Heart left ventricle (tissue), 16 donors: ENCODE measurements at regions of chr11 and their contacts with region 1.

Region 1: GRCh38 chr11:11787305-11788062 is 54.3 kb upstream of the USP47 start:
- DNase-seq: peak; percentile 55 to 78 (median 62)
- ATAC-seq: peak; percentile 53 to 93 (median 87)
- H3K4me3 ChIP-seq: no peak overlapping the region
- H3K27ac ChIP-seq: no peak overlapping the region
- H3K4me1 ChIP-seq: peaks cover 0 to 6% (median 0%) of the 10 kb centered on the region in 12 donors
- H3K27me3 ChIP-seq: no peaks in the 10 kb centered on the region
- CTCF ChIP-seq: peak; percentile 81 to 97 (median 87)
- POLR2A ChIP-seq: no peak

Region 2: GRCh38 chr11:10933455-10934292 is 853.8 kb before region 1 on chr11:
- intact Hi-C with region 1: loop called in 9 of 10 experiments (anchors 1 to 5 kb)
- DNase-seq: peak; percentile 88 to 93 (median 91)
- ATAC-seq: peak; percentile 83 to 95 (median 92)
- H3K4me3 ChIP-seq: peak overlapping the region in 11 of 12 donors; percentile 27 to 60 (median 50)
- H3K27ac ChIP-seq: peak overlapping the region in 11 of 12 donors; percentile 30 to 84 (median 73)
- H3K4me1 ChIP-seq: peaks cover 0 to 24% (median 6%) of the 10 kb centered on the region in 12 donors
- H3K27me3 ChIP-seq: peaks cover 0 to 12% (median 0%) of the 10 kb centered on the region in 9 donors
- CTCF ChIP-seq: peak; percentile 88 to 99 (median 96)
- POLR2A ChIP-seq: peak in 1 of 2 donors; percentile 30

Region 3: GRCh38 chr11:11036848-11037732 is 750.4 kb before region 1 on chr11:
- intact Hi-C with region 1: loop called in 8 of 10 experiments (anchors 1 to 2 kb)
- DNase-seq: peak in 2 of 5 donors; percentile 39
- ATAC-seq: peak; percentile 68 to 88 (median 78)
- H3K4me3 ChIP-seq: no peak overlapping the region
- H3K27ac ChIP-seq: peak overlapping the region in 1 of 12 donors; percentile 75
- H3K4me1 ChIP-seq: no peaks in the 10 kb centered on the region
- H3K27me3 ChIP-seq: no peaks in the 10 kb centered on the region
- CTCF ChIP-seq: peak; percentile 66 to 88 (median 80)
- POLR2A ChIP-seq: no peak

Region 4: DNA sequence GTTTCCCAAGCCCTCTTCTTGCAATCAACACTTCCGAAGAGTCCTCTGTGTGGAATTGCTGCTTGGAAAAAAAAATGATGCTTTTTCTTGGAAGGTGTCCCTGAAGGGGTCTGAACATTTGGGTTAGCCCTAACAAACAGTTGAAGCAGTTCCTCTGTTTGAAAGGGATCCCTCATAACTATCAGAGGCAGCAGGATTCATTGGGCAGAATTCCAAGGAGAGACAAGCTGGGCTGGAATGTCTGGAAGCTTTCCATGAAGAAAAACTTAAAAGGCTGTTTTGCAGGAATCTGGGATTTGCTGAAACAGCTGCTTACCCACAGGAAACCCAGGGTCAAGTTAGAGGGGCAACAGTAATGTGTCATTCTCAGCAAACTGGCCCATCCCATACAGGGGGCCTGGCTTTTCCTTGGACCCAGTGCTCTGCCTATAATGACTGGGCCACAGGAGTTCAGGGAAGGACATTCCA is 437.6 kb before region 1 on chr11:
- intact Hi-C with region 1: loop called in 1 of 10 experiments (anchors 10 kb)
- DNase-seq: peak in 3 of 5 donors; percentile 39 to 47 (median 43)
- ATAC-seq: peak; percentile 41 to 71 (median 60)
- H3K4me3 ChIP-seq: no peak overlapping the region
- H3K27ac ChIP-seq: peak overlapping the region in 1 of 12 donors; percentile 14
- H3K4me1 ChIP-seq: peaks cover 0 to 49% (median 32%) of the 10 kb centered on the region in 12 donors
- H3K27me3 ChIP-seq: no peaks in the 10 kb centered on the region
- CTCF ChIP-seq: no peak
- POLR2A ChIP-seq: no peak

Region 5: GRCh38 chr11:11407065-11407762 is 380.3 kb before region 1 on chr11:
- intact Hi-C with region 1: loop called in 6 of 10 experiments (anchors 2 to 10 kb)
- DNase-seq: peak in 3 of 5 donors; percentile 46 to 66 (median 59)
- ATAC-seq: peak; percentile 66 to 79 (median 74)
- H3K4me3 ChIP-seq: no peak overlapping the region
- H3K27ac ChIP-seq: peak overlapping the region; percentile 2 to 88 (median 55)
- H3K4me1 ChIP-seq: peaks cover 0 to 82% (median 41%) of the 10 kb centered on the region in 12 donors
- H3K27me3 ChIP-seq: peaks cover 0 to 5% (median 0%) of the 10 kb centered on the region in 9 donors
- CTCF ChIP-seq: peak in 7 of 12 donors; percentile 13 to 56 (median 45)
- POLR2A ChIP-seq: no peak

Region 6: DNA sequence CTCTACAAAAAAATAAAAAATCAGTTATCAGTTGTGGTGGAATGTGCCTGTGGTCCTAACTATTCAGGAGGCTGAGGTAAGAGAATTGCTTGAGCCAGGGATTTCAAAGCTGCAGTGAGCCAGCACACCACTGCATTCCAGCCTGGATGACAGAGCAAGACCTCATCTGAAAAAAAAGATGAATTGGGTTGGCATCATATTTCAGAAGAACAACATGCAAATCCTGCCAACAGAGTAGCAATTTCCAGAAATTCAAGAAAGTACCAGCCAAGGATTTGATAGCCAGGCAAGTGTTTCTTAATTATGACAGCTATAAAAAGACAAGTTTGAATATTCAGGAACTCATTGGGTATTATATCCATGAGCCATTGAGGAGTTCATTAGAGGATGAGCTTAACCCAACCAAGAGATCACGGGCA is 129.5 kb after region 1 on chr11:
- intact Hi-C with region 1: no loop called
- DNase-seq: no peak
- ATAC-seq: peak in 3 of 4 donors; percentile 30 to 72 (median 44)
- H3K4me3 ChIP-seq: no peak overlapping the region
- H3K27ac ChIP-seq: peak overlapping the region in 4 of 12 donors; percentile 4 to 31 (median 16)
- H3K4me1 ChIP-seq: peaks cover 0 to 16% (median 7%) of the 10 kb centered on the region in 12 donors
- H3K27me3 ChIP-seq: no peaks in the 10 kb centered on the region
- CTCF ChIP-seq: no peak
- POLR2A ChIP-seq: no peak